ENCODE measurements at regions of chr7 and their contacts with region 1.

Region 1: GRCh38 chr7:11607686-11608085 is 224.3 kb downstream of the THSD7A start:
- DNase-seq: peak; percentile 89
- H3K4me3 ChIP-seq: no peak overlapping the region
- H3K27ac ChIP-seq: no peak overlapping the region
- H3K4me1 ChIP-seq: peaks cover 14% of the 10 kb centered on the region
- H3K27me3 ChIP-seq: no peaks in the 10 kb centered on the region
- CTCF ChIP-seq: no peak
- POLR2A ChIP-seq: no peak

Region 2: DNA sequence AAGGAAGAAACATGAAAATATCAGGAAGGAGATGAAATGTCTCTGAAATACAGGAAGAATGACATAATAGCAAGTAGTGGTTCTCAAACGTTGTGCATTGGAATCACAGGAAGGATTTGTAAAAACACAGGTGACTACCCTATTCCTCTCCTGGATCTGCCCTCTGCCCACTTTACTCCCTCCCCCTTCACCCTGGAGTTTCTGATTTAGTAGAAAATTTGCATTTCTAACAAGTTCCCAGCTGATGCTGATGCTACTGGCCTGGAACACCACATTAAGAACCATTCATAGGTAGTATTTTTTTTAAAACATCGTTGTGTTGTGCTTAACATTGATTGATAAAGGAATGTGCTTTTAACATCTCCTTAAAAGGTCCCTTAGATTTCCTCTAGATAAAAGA is 503.1 kb before region 1 on chr7:
- CTCF ChIA-PET with region 1: no interaction called
- POLR2A ChIA-PET with region 1: no interaction called
- dilution Hi-C with region 1: no loop called
- intact Hi-C with region 1: no loop called
- DNase-seq: no peak
- H3K4me3 ChIP-seq: no peak overlapping the region
- H3K27ac ChIP-seq: no peak overlapping the region
- H3K4me1 ChIP-seq: peaks cover 6% of the 10 kb centered on the region
- H3K27me3 ChIP-seq: no peaks in the 10 kb centered on the region
- CTCF ChIP-seq: no peak
- POLR2A ChIP-seq: no peak

Region 3: GRCh38 chr7:11592699-11593098 is 15.0 kb before region 1 on chr7:
- CTCF ChIA-PET with region 1: interaction called, 7 read pairs
- POLR2A ChIA-PET with region 1: interaction called, 4 read pairs
- dilution Hi-C with region 1: no loop called
- intact Hi-C with region 1: loop called (anchors 2 kb)
- DNase-seq: peak; percentile 58
- H3K4me3 ChIP-seq: no peak overlapping the region
- H3K27ac ChIP-seq: no peak overlapping the region
- H3K4me1 ChIP-seq: peaks cover 21% of the 10 kb centered on the region
- H3K27me3 ChIP-seq: no peaks in the 10 kb centered on the region
- CTCF ChIP-seq: no peak
- POLR2A ChIP-seq: no peak

Region 4: DNA sequence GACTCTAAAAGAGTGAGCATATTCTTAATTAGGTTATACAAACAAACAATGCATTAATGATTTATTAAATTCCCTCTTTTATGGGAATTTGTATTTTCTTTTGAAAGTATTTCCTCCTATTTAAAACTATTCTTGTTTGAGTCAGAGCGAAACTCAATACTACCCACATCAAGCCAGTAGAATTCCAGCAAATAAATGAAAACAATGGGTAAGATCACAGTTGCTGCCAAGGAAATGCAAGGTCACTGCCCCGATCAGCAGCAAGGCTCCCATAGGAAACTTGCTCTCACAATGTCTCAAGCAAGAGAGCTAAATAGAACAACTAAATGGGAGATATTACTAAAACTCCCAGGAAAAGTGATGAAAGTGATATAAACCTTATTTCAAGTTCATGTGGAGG is 18.0 kb after region 1 on chr7:
- CTCF ChIA-PET with region 1: interaction called, 5 read pairs
- POLR2A ChIA-PET with region 1: interaction called, 3 read pairs
- dilution Hi-C with region 1: no loop called
- intact Hi-C with region 1: loop called (anchors 2 kb)
- DNase-seq: peak; percentile 96
- H3K4me3 ChIP-seq: no peak overlapping the region
- H3K27ac ChIP-seq: peak overlapping the region; percentile 56
- H3K4me1 ChIP-seq: peaks cover 16% of the 10 kb centered on the region
- H3K27me3 ChIP-seq: no peaks in the 10 kb centered on the region
- CTCF ChIP-seq: no peak
- POLR2A ChIP-seq: no peak